Naive thymus-derived CD4-positive, alpha-beta T cell (primary cell): ENCODE measurements at regions of chr3 and their contacts with region 1.

Region 1: DNA sequence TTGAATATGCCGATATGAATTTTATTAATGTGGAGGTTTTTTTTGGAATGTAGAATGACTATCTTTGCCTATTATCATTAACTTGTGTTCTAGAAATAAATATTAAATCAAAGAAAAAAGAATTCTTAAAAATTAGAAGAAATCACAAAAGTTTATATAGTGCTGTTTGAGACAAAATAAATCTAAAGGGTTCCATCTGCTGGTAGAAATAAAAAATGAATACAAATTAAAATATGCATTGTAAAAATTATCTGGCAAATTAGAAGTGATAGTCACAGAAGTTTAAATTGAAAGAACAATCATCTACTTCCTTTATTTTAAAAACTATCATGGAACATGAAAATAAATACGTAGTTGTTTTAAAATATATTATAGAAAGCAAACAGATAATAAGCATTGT is 22.7 kb upstream of the ZBTB20 start:
- DNase-seq: peak in 5 of 9 donors; percentile 14 to 36 (median 23)
- ATAC-seq: no peak
- H3K4me3 ChIP-seq: no peak overlapping the region
- H3K4me3 Mint-ChIP-seq: no peak overlapping the region
- H3K27ac ChIP-seq: no peak overlapping the region
- H3K27ac Mint-ChIP-seq: no peak overlapping the region
- H3K4me1 ChIP-seq: peaks cover 11 to 13% of the 10 kb centered on the region in 2 donors
- H3K4me1 Mint-ChIP-seq: peaks cover 7 to 13% (median 12%) of the 10 kb centered on the region in 7 donors
- H3K27me3 ChIP-seq: no peaks in the 10 kb centered on the region
- H3K27me3 Mint-ChIP-seq: peaks cover 0 to 10% (median 0%) of the 10 kb centered on the region in 5 donors

Region 2: GRCh38 chr3:114319453-114319852 is 850.4 kb before region 1 on chr3:
- CTCF ChIA-PET with region 1: no interaction called
- POLR2A ChIA-PET with region 1: no interaction called
- intact Hi-C with region 1: no loop called
- DNase-seq: no peak
- ATAC-seq: no peak
- H3K4me3 ChIP-seq: no peak overlapping the region
- H3K4me3 Mint-ChIP-seq: no peak overlapping the region
- H3K27ac ChIP-seq: no peak overlapping the region
- H3K27ac Mint-ChIP-seq: no peak overlapping the region
- H3K4me1 ChIP-seq: peaks cover 0 to 54% of the 10 kb centered on the region in 2 donors
- H3K4me1 Mint-ChIP-seq: peaks cover 0 to 37% (median 4%) of the 10 kb centered on the region in 7 donors
- H3K27me3 ChIP-seq: no peaks in the 10 kb centered on the region
- H3K27me3 Mint-ChIP-seq: no peaks in the 10 kb centered on the region

Region 3: DNA sequence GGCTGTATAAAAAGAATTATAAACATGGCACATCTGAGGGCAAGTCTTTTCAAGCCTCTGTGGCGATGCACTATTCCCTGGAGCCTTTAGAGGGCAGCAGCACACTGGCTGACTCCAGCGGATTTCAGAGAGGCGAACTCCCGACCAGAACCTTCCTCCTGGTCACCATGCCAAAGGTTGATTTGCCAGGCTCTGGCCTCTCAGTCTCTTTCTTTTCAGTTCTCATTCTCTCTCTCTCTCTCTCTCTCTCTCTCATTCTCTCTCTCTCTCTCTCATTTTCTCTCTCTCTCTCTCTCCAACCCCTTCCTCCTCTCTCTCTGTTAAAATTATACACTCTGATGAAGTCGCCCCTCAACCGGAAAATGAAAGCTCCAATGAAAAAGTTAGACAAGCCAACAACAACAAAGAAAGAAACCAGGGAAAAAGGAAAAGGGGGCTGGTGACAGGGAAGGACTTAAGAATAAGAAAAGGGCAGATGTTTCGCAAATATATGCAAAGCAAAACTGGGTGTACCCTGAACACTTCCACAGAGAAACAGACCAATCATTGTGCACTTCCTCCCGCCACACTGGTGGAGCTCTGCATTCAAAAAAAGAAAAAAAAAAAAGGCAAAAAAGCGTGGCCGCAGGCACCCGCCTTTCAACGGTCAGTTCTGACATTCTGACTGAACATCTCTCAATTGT is 785.8 kb before region 1 on chr3:
- CTCF ChIA-PET with region 1: no interaction called
- POLR2A ChIA-PET with region 1: no interaction called
- intact Hi-C with region 1: loop called (anchors 2 to 10 kb)
- DNase-seq: peak; percentile 7 to 58 (median 37)
- ATAC-seq: peak; percentile 96
- H3K4me3 ChIP-seq: peak overlapping the region; percentile 57
- H3K4me3 Mint-ChIP-seq: peak overlapping the region in 8 of 10 donors; percentile 60 to 88 (median 77)
- H3K27ac ChIP-seq: no peak overlapping the region
- H3K27ac Mint-ChIP-seq: peak overlapping the region in 5 of 9 donors; percentile 27 to 73 (median 56)
- H3K4me1 ChIP-seq: peaks cover 0 to 7% of the 10 kb centered on the region in 2 donors
- H3K4me1 Mint-ChIP-seq: peaks cover 0 to 23% (median 12%) of the 10 kb centered on the region in 7 donors
- H3K27me3 ChIP-seq: no peaks in the 10 kb centered on the region
- H3K27me3 Mint-ChIP-seq: no peaks in the 10 kb centered on the region

Region 4: DNA sequence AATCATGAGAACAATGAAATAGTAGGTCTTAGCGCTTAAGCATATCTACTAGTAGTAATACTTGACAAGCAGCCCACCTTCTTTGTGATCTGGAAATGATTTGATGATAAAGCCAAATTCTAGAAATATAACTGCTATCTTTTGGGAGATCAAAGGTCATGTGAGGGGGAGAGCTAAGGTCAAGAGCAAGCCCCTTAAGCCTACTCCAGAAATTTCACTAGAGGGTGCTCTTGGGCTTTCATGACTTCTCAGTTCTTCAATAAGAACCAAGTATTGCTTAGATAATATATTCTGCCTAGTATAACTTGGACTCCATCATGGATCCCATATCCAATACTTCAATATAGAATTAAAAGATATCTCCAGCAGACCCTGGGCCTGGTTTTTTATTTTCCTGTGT is 342.3 kb before region 1 on chr3:
- CTCF ChIA-PET with region 1: no interaction called
- POLR2A ChIA-PET with region 1: no interaction called
- intact Hi-C with region 1: loop called (anchors 1 to 5 kb)
- DNase-seq: peak in 2 of 9 donors; percentile 11 to 18
- ATAC-seq: peak; percentile 50
- H3K4me3 ChIP-seq: no peak overlapping the region
- H3K4me3 Mint-ChIP-seq: no peak overlapping the region
- H3K27ac ChIP-seq: no peak overlapping the region
- H3K27ac Mint-ChIP-seq: no peak overlapping the region
- H3K4me1 ChIP-seq: no peaks in the 10 kb centered on the region
- H3K4me1 Mint-ChIP-seq: peaks cover 0 to 11% (median 4%) of the 10 kb centered on the region in 7 donors
- H3K27me3 ChIP-seq: no peaks in the 10 kb centered on the region
- H3K27me3 Mint-ChIP-seq: no peaks in the 10 kb centered on the region

Region 5: GRCh38 chr3:115040673-115041286 is 129.0 kb before region 1 on chr3:
- CTCF ChIA-PET with region 1: interaction called, 7 read pairs
- POLR2A ChIA-PET with region 1: no interaction called
- intact Hi-C with region 1: loop called (anchors 1 kb)
- DNase-seq: peak in 7 of 9 donors; percentile 15 to 48 (median 30)
- ATAC-seq: peak; percentile 66
- H3K4me3 ChIP-seq: no peak overlapping the region
- H3K4me3 Mint-ChIP-seq: no peak overlapping the region
- H3K27ac ChIP-seq: no peak overlapping the region
- H3K27ac Mint-ChIP-seq: peak overlapping the region in 2 of 9 donors; percentile 3 to 51
- H3K4me1 ChIP-seq: no peaks in the 10 kb centered on the region
- H3K4me1 Mint-ChIP-seq: peaks cover 0 to 35% (median 16%) of the 10 kb centered on the region in 7 donors
- H3K27me3 ChIP-seq: no peaks in the 10 kb centered on the region
- H3K27me3 Mint-ChIP-seq: no peaks in the 10 kb centered on the region

Region 6: GRCh38 chr3:115092220-115092791 is 77.5 kb before region 1 on chr3:
- CTCF ChIA-PET with region 1: interaction called, 48 read pairs
- POLR2A ChIA-PET with region 1: interaction called, 9 read pairs
- intact Hi-C with region 1: loop called (anchors 1 kb)
- DNase-seq: peak; percentile 24 to 62 (median 44)
- ATAC-seq: peak; percentile 76
- H3K4me3 ChIP-seq: no peak overlapping the region
- H3K4me3 Mint-ChIP-seq: no peak overlapping the region
- H3K27ac ChIP-seq: no peak overlapping the region
- H3K27ac Mint-ChIP-seq: peak overlapping the region in 5 of 9 donors; percentile 6 to 46 (median 32)
- H3K4me1 ChIP-seq: peaks cover 0 to 9% of the 10 kb centered on the region in 2 donors
- H3K4me1 Mint-ChIP-seq: peaks cover 3 to 73% (median 44%) of the 10 kb centered on the region in 7 donors
- H3K27me3 ChIP-seq: no peaks in the 10 kb centered on the region
- H3K27me3 Mint-ChIP-seq: no peaks in the 10 kb centered on the region